CD4-positive, alpha-beta memory T cell (primary cell): ENCODE measurements at regions of chr2 and their contacts with region 1.

Region 1: DNA sequence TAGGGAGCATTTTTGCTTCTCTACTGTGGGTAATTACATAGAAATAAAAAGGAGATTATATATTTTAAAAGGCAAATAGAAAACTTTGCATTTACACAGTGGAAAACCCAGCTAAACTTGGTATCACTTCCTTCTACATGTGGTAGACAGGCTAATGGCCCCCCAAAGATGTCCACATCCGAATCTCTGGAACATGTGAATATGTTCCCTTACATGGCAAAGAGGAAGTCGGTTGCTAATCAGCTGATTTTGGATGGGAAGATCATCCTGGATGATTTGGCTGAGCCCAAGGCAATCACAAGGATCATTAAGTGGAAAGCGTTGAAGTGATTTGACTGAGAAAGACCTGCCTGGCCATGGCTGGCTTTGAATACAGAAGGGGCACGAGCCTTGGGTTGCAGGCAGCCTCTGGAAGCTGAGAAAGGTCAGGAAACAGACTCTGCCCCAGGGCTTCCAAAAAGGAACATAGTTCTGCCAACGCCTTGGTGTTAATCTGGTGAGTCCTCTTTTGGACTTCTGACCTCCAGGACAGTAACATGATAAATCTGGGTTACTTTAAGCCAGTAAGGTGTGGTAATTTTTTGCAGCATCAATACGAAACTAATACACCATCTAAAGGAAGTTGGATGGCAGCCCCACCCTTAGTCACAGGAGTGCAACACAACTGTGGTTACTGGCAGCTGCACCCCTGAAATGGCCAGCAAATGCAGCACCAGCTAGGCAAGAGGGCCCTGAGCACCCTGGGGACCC is 26.0 kb downstream of the CREG2 start:
- DNase-seq: peak in 4 of 5 donors; percentile 24 to 38 (median 35)
- H3K4me3 ChIP-seq: peak overlapping the region in 1 of 2 donors; percentile 46
- H3K4me3 Mint-ChIP-seq: peak overlapping the region in 7 of 8 donors; percentile 53 to 81 (median 74)
- H3K27ac ChIP-seq: peak overlapping the region; percentile 34
- H3K27ac Mint-ChIP-seq: peak overlapping the region; percentile 15 to 93 (median 80)
- H3K4me1 ChIP-seq: peaks cover 33% of the 10 kb centered on the region
- H3K4me1 Mint-ChIP-seq: peaks cover 23 to 37% (median 31%) of the 10 kb centered on the region in 4 donors
- H3K27me3 ChIP-seq: no peaks in the 10 kb centered on the region
- H3K27me3 Mint-ChIP-seq: no peaks in the 10 kb centered on the region

Region 2: GRCh38 chr2:101030863-101031554 is 330.3 kb before region 1 on chr2:
- CTCF ChIA-PET with region 1: no interaction called
- POLR2A ChIA-PET with region 1: no interaction called
- intact Hi-C with region 1: no loop called
- DNase-seq: no peak
- H3K4me3 ChIP-seq: no peak overlapping the region
- H3K4me3 Mint-ChIP-seq: no peak overlapping the region
- H3K27ac ChIP-seq: no peak overlapping the region
- H3K27ac Mint-ChIP-seq: no peak overlapping the region
- H3K4me1 ChIP-seq: no peaks in the 10 kb centered on the region
- H3K4me1 Mint-ChIP-seq: no peaks in the 10 kb centered on the region
- H3K27me3 ChIP-seq: no peaks in the 10 kb centered on the region
- H3K27me3 Mint-ChIP-seq: peaks cover 3 to 7% of the 10 kb centered on the region in 2 donors

Region 3: GRCh38 chr2:101328474-101329007 is 32.8 kb before region 1 on chr2:
- CTCF ChIA-PET with region 1: interaction called, 17 read pairs
- POLR2A ChIA-PET with region 1: interaction called, 18 read pairs
- intact Hi-C with region 1: no loop called
- DNase-seq: peak; percentile 65 to 81 (median 80)
- H3K4me3 ChIP-seq: peak overlapping the region; percentile 2 to 39
- H3K4me3 Mint-ChIP-seq: no peak overlapping the region
- H3K27ac ChIP-seq: peak overlapping the region; percentile 52
- H3K27ac Mint-ChIP-seq: no peak overlapping the region
- H3K4me1 ChIP-seq: peaks cover 70% of the 10 kb centered on the region
- H3K4me1 Mint-ChIP-seq: peaks cover 5 to 33% (median 6%) of the 10 kb centered on the region in 4 donors
- H3K27me3 ChIP-seq: no peaks in the 10 kb centered on the region
- H3K27me3 Mint-ChIP-seq: no peaks in the 10 kb centered on the region

Region 4: DNA sequence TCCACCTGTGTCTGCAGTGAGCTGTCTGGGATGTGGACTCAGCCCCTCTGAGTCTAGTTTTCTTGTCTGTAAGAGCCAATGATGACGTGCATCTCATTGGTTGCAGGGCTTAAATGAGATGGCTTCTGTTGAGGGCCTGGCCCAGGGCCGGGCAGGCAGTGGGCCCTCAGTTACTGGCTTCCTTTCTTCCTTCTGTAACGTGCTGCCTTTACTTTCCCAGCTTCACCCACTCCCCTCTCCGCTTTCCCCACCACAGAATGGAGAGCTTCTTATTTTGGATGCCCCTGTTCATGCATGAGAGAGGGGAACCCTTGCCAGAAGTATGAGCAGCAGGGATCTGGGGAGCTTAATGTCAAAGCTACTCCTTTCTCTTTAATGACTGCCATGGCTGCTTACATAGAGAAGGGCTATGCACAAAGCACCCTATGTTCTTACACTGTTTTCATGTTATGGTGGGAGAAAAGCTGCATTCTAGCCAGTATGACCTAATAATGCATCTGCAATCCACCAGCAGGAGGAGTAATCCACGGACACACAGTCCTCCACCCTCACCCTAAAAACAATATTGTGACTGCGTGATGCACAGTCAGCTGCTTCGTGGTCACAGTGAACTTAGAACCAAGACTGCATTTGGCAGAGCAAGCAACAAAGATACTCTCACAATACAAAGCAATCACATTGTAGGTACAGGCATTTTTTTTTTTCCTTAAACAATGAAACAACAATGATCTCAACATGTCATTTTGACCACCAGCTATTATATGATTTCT is 11.2 kb before region 1 on chr2:
- CTCF ChIA-PET with region 1: interaction called, 112 read pairs
- POLR2A ChIA-PET with region 1: interaction called, 41 read pairs
- intact Hi-C with region 1: no loop called
- DNase-seq: peak in 2 of 5 donors; percentile 20 to 38
- H3K4me3 ChIP-seq: no peak overlapping the region
- H3K4me3 Mint-ChIP-seq: peak overlapping the region in 2 of 8 donors; percentile 3 to 29
- H3K27ac ChIP-seq: no peak overlapping the region
- H3K27ac Mint-ChIP-seq: peak overlapping the region in 3 of 7 donors; percentile 10 to 23 (median 15)
- H3K4me1 ChIP-seq: peaks cover 12% of the 10 kb centered on the region
- H3K4me1 Mint-ChIP-seq: peaks cover 7 to 9% (median 8%) of the 10 kb centered on the region in 4 donors
- H3K27me3 ChIP-seq: no peaks in the 10 kb centered on the region
- H3K27me3 Mint-ChIP-seq: no peaks in the 10 kb centered on the region

Region 5: GRCh38 chr2:101387151-101387807 is 26.0 kb after region 1 on chr2 and contains the start of gene CREG2:
- CTCF ChIA-PET with region 1: interaction called, 52 read pairs
- POLR2A ChIA-PET with region 1: interaction called, 23 read pairs
- intact Hi-C with region 1: no loop called
- DNase-seq: peak in 4 of 5 donors; percentile 56 to 63 (median 62)
- H3K4me3 ChIP-seq: peak within 1 kb of the TSS in 1 of 2 donors; percentile 38
- H3K4me3 Mint-ChIP-seq: peak within 1 kb of the TSS; percentile 75 to 89 (median 83)
- H3K27ac ChIP-seq: no peak within 1 kb of the TSS
- H3K27ac Mint-ChIP-seq: no peak within 1 kb of the TSS
- H3K4me1 ChIP-seq: peaks cover 15% of the 10 kb centered on the region
- H3K4me1 Mint-ChIP-seq: peaks cover 4 to 11% (median 8%) of the 10 kb centered on the region in 4 donors
- H3K27me3 ChIP-seq: peaks cover 17% of the 10 kb centered on the region
- H3K27me3 Mint-ChIP-seq: peaks cover 30 to 43% of the 10 kb centered on the region in 2 donors
- total RNA-seq, gene CREG2: not detected